AG04449 (cell line): ENCODE measurements at regions of chr11 and their contacts with region 1.

Region 1: DNA sequence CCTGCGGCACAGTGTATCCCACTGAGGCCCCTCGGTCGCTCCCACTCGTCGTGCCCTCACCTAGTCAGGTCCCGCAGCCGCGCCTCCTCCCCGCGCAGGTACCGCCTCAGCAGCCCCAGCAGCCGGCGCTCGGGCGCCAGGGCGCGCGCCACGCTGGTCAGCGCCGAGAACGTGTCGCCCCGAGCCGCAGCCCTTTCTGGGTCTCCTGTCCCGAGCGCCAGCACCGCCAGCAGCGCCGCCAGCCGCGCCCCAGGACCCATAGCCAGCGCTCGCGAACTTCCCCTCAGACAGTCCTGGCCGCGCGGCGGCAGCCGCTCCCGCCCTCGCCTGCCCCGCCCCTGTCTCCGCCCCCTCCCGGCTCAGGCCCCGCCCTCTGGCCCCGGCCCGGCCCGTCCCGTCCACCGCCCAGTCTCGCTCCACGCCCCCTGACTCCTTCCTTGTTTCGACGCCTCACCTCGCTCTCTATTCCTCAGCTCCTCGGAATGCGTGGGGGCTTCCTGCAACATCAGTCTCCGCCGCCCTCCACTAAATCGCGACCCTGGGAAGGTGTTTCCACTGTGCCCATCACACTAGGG is at the start of gene P4HA3:
- DNase-seq: no peak
- H3K4me3 ChIP-seq: peak within 1 kb of the TSS; percentile 59
- CTCF ChIP-seq: no peak

Region 2: DNA sequence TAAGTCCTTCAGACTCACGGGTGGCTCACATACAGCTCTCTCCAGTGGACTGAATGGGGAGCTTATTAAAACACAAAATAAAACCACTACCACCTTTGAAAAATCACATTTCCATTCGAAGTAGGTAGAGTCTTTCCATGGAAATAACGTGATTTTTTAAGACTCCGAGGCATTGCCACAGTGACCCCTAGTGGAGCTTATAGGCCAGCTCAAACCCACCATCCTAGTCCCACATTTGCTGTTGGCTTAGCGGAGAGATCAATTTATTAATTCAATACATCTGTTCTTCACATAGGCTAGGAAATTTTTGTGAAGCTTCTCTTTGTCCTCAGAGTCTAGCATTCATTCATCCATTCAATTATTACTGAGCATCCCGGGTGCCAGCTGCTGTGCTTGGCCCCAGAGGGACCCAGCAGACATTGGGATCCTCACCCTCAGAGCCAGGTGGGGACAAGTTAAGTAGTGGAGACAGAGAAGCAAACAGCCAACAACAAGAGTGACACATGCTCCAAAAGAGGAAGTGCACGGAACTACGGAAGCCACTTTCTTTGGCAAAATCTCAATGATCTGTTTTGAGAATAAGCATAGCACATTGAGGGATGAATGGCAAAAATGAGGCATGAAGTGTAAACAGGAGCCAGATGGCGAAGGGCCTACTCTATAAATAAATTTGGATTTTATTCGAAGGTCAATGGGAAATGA is 10.2 kb after region 1 on chr11:
- CTCF ChIA-PET with region 1: interaction called, 28 read pairs
- POLR2A ChIA-PET with region 1: no interaction called
- DNase-seq: no peak
- H3K4me3 ChIP-seq: no peak overlapping the region
- CTCF ChIP-seq: peak; percentile 43